GM12878 (cell line): ENCODE measurements at regions of chr2 and their contacts with region 1.

Region 1: DNA sequence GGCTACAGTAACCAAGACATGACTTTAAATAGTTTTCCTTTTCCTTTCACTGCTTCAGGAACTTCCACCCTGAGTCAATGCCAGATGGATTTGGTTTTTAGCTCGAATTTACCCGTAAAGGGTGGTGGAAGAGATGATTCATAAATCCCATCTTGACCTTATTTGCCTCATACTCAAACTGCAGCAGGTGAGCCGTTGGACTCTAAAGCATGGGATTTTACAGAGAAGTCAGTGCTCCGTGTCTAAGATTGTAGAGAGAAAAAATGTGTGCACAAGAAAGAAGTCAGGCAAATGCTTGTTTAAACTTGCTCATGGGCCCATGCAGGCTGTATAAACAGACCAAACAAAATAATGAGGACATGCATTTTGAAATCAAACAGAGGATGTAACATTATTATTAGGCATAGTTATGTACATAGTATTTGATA is 369.7 kb upstream of the TRIB2 start:
- DNase-seq: no peak
- ATAC-seq: no peak
- H3K4me3 ChIP-seq: no peak overlapping the region
- H3K27ac ChIP-seq: no peak overlapping the region
- H3K4me1 ChIP-seq: no peaks in the 10 kb centered on the region
- H3K27me3 ChIP-seq: no peaks in the 10 kb centered on the region
- CTCF ChIP-seq: no peak
- EP300 ChIP-seq: no peak
- POLR2A ChIP-seq: no peak
- RAD21 ChIP-seq: no peak

Region 2: DNA sequence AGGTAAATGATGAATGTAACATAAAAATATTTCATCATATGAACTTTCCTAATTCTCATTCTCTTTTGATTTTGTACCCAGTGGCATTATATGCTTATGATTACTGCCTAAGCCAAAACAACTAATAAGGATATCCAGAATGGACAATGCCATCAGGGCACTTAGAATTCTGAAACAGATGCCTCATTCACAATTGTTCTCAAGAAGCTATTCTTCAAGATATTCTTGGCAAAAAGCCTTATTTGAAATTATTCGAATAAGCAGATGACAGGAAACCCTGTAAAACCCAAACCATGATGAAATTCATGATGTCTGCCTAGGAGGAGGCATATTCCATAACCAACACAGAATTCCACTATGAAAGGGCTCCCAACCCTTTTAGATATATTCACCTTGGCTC is 16.5 kb after region 1 on chr2:
- CTCF ChIA-PET with region 1: no interaction called
- POLR2A ChIA-PET with region 1: no interaction called
- RAD21 ChIA-PET with region 1: no interaction called
- SMC1A ChIA-PET with region 1: interaction called, 4 read pairs
- in situ Hi-C with region 1: no loop called
- intact Hi-C with region 1: loop called (anchors 2 kb)
- DNase-seq: no peak
- ATAC-seq: no peak
- H3K4me3 ChIP-seq: no peak overlapping the region
- H3K27ac ChIP-seq: no peak overlapping the region
- H3K4me1 ChIP-seq: no peaks in the 10 kb centered on the region
- H3K27me3 ChIP-seq: no peaks in the 10 kb centered on the region
- CTCF ChIP-seq: no peak
- EP300 ChIP-seq: no peak
- POLR2A ChIP-seq: no peak
- RAD21 ChIP-seq: no peak

Region 3: DNA sequence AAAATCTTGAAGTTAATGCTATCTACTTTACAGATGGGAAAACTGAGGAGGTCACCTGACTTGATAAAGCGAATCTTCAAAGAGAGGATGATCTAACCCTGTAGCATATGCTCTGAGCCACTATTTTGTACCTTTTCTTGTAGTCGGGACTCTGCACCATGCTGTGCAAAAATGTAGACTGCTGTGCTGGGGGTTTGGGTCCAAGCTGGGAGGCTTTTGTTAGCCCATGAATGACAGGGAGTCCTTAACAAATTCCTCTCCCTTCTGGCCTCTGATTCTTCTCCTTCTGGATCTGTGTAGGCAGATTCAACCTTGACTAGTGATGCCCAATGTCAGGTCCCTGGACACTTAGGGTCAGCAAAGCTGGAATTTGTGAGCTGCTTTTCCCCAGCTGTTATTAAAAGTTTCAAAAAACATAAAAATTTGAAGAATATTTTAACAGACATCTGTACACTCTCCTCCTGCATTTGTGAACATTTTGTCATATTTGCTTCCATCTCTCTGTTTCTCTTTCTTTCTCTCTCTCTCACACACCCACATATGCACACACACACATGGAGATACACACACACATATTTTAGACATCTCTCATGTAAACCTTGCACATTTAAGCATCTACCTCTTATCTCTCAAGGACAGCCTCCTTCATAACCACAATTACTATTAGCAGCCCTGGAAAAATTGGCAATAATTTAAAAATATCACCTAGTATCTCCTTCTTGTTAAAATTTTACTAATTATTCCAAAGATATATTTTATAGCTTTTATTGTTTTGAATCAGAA is 34.7 kb after region 1 on chr2:
- CTCF ChIA-PET with region 1: no interaction called
- POLR2A ChIA-PET with region 1: no interaction called
- RAD21 ChIA-PET with region 1: no interaction called
- SMC1A ChIA-PET with region 1: no interaction called
- in situ Hi-C with region 1: no loop called
- intact Hi-C with region 1: no loop called
- DNase-seq: no peak
- ATAC-seq: no peak
- H3K4me3 ChIP-seq: no peak overlapping the region
- H3K27ac ChIP-seq: no peak overlapping the region
- H3K4me1 ChIP-seq: no peaks in the 10 kb centered on the region
- H3K27me3 ChIP-seq: no peaks in the 10 kb centered on the region
- CTCF ChIP-seq: no peak
- EP300 ChIP-seq: no peak
- POLR2A ChIP-seq: no peak
- RAD21 ChIP-seq: no peak

Region 4: GRCh38 chr2:12441750-12442475 is 94.8 kb after region 1 on chr2:
- CTCF ChIA-PET with region 1: no interaction called
- POLR2A ChIA-PET with region 1: no interaction called
- RAD21 ChIA-PET with region 1: no interaction called
- SMC1A ChIA-PET with region 1: no interaction called
- in situ Hi-C with region 1: no loop called
- intact Hi-C with region 1: no loop called
- DNase-seq: no peak
- ATAC-seq: no peak
- H3K4me3 ChIP-seq: no peak overlapping the region
- H3K27ac ChIP-seq: no peak overlapping the region
- H3K4me1 ChIP-seq: no peaks in the 10 kb centered on the region
- H3K27me3 ChIP-seq: no peaks in the 10 kb centered on the region
- CTCF ChIP-seq: no peak
- EP300 ChIP-seq: no peak
- POLR2A ChIP-seq: no peak
- RAD21 ChIP-seq: no peak

Region 5: GRCh38 chr2:12452211-12452610 is 105.1 kb after region 1 on chr2:
- CTCF ChIA-PET with region 1: no interaction called
- POLR2A ChIA-PET with region 1: no interaction called
- RAD21 ChIA-PET with region 1: no interaction called
- SMC1A ChIA-PET with region 1: no interaction called
- in situ Hi-C with region 1: no loop called
- intact Hi-C with region 1: no loop called
- DNase-seq: no peak
- ATAC-seq: peak; percentile 19; the same call in 1 of the 3 replicates
- H3K4me3 ChIP-seq: no peak overlapping the region
- H3K27ac ChIP-seq: no peak overlapping the region
- H3K4me1 ChIP-seq: no peaks in the 10 kb centered on the region
- H3K27me3 ChIP-seq: no peaks in the 10 kb centered on the region
- CTCF ChIP-seq: no peak
- EP300 ChIP-seq: no peak
- POLR2A ChIP-seq: no peak
- RAD21 ChIP-seq: no peak

Region 6: GRCh38 chr2:13968811-13969210 is 1621.7 kb after region 1 on chr2:
- CTCF ChIA-PET with region 1: no interaction called
- POLR2A ChIA-PET with region 1: no interaction called
- RAD21 ChIA-PET with region 1: no interaction called
- SMC1A ChIA-PET with region 1: no interaction called
- in situ Hi-C with region 1: no loop called
- intact Hi-C with region 1: no loop called
- DNase-seq: no peak
- ATAC-seq: peak; percentile 35; the same call in 1 of the 3 replicates
- H3K4me3 ChIP-seq: no peak overlapping the region
- H3K27ac ChIP-seq: no peak overlapping the region
- H3K4me1 ChIP-seq: no peaks in the 10 kb centered on the region
- H3K27me3 ChIP-seq: no peaks in the 10 kb centered on the region
- CTCF ChIP-seq: no peak
- EP300 ChIP-seq: no peak
- POLR2A ChIP-seq: no peak
- RAD21 ChIP-seq: no peak